GM12878 (cell line): ENCODE measurements at regions of chr16 and their contacts with region 1.

Region 1: GRCh38 chr16:76784530-76784929 is 406.5 kb upstream of the MON1B start:
- DNase-seq: no peak
- ATAC-seq: peak; percentile 94
- H3K4me3 ChIP-seq: no peak overlapping the region
- H3K27ac ChIP-seq: no peak overlapping the region
- H3K4me1 ChIP-seq: no peaks in the 10 kb centered on the region
- H3K27me3 ChIP-seq: no peaks in the 10 kb centered on the region
- CTCF ChIP-seq: no peak
- EP300 ChIP-seq: no peak
- POLR2A ChIP-seq: no peak
- RAD21 ChIP-seq: no peak

Region 2: DNA sequence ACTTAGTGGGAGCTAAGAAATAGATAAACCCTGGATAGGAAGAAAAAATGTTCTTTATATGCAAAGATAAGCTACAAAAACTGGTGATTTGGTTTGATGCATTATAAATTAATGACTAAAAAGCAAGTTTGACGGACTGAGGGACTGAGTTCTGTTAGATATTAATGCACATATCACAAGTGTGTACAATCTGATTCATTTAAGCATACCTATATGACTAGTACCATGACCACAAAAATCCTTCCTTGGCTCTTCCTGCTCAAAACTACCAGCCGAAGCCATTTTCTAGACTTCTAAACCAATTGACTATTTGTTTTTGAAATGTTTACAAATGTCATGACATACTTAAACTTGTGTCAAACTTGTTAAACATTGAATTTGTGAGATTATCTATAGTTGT is 31.9 kb after region 1 on chr16:
- CTCF ChIA-PET with region 1: no interaction called
- POLR2A ChIA-PET with region 1: no interaction called
- RAD21 ChIA-PET with region 1: no interaction called
- SMC1A ChIA-PET with region 1: interaction called, 14 read pairs
- in situ Hi-C with region 1: no loop called
- intact Hi-C with region 1: no loop called
- DNase-seq: no peak
- ATAC-seq: peak; percentile 58
- H3K4me3 ChIP-seq: no peak overlapping the region
- H3K27ac ChIP-seq: no peak overlapping the region
- H3K4me1 ChIP-seq: no peaks in the 10 kb centered on the region
- H3K27me3 ChIP-seq: no peaks in the 10 kb centered on the region
- CTCF ChIP-seq: no peak
- EP300 ChIP-seq: no peak
- POLR2A ChIP-seq: no peak
- RAD21 ChIP-seq: no peak